ENCODE measurements at regions of chr14 and their contacts with region 1.

Region 1: DNA sequence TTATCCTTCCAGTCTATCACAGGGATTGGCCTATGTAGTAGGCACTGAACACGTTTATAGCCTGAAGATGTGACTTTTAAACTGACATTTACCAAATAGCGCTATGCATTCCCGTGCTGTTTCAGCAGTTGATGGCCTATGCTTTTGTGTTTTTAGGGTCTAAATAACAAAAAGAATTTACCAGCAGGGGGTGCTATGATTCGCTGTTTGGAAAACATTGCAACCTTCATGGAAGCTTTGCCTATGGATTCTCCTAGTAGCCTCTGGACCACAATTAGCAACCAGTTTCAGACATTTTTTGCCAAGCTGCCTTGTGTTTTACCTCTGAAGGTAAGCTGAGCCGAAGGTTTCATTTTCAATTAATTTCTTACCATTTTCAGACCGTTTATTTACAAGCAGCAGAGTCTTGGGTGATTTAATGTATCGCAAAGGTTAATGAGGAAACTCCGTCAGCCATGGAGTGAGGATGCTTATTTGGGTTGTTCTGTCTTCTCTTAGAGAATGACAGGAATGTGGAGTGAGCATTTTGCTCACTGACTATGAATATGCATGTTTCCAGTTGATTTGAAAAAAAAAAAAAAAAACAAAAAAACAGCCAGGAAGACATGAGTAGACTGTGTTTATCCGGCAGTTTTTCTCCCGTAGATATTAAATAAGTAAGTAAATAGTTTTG is 133.1 kb downstream of the PRIMA1 start:
- DNase-seq: peak; percentile 57
- H3K4me3 ChIP-seq: no peak overlapping the region
- H3K27ac ChIP-seq: no peak overlapping the region
- H3K4me1 ChIP-seq: no peaks in the 10 kb centered on the region
- CTCF ChIP-seq: peak; percentile 83

Region 2: DNA sequence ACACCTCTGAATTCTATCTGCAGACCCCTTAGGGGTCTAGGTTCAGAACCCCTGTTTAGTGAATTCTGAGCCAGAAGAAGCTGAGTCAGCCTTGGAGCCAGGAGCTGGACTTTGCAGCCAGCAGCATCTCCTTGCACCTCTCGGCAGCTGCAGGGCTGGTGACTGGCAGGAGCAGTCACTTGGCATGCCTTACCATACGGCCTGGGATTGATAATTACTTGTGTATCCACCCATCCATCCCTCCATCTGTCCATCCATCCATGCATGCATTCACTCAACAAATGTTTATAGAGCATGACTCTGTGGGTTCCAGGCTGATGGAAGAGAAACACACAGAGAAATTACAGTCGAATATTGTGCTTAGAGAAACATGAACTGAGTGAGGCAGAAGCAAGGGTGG is 200.5 kb after region 1 on chr14:
- CTCF ChIA-PET with region 1: no interaction called
- POLR2A ChIA-PET with region 1: no interaction called
- intact Hi-C with region 1: no loop called
- DNase-seq: no peak
- H3K4me3 ChIP-seq: no peak overlapping the region
- H3K27ac ChIP-seq: no peak overlapping the region
- H3K4me1 ChIP-seq: no peaks in the 10 kb centered on the region
- CTCF ChIP-seq: no peak

Region 3: GRCh38 chr14:93892923-93893558 is 237.8 kb after region 1 on chr14:
- CTCF ChIA-PET with region 1: no interaction called
- POLR2A ChIA-PET with region 1: no interaction called
- intact Hi-C with region 1: loop called (anchors 2 kb)
- DNase-seq: peak; percentile 66
- H3K4me3 ChIP-seq: no peak overlapping the region
- H3K27ac ChIP-seq: no peak overlapping the region
- H3K4me1 ChIP-seq: no peaks in the 10 kb centered on the region
- CTCF ChIP-seq: peak; percentile 94

Region 4: DNA sequence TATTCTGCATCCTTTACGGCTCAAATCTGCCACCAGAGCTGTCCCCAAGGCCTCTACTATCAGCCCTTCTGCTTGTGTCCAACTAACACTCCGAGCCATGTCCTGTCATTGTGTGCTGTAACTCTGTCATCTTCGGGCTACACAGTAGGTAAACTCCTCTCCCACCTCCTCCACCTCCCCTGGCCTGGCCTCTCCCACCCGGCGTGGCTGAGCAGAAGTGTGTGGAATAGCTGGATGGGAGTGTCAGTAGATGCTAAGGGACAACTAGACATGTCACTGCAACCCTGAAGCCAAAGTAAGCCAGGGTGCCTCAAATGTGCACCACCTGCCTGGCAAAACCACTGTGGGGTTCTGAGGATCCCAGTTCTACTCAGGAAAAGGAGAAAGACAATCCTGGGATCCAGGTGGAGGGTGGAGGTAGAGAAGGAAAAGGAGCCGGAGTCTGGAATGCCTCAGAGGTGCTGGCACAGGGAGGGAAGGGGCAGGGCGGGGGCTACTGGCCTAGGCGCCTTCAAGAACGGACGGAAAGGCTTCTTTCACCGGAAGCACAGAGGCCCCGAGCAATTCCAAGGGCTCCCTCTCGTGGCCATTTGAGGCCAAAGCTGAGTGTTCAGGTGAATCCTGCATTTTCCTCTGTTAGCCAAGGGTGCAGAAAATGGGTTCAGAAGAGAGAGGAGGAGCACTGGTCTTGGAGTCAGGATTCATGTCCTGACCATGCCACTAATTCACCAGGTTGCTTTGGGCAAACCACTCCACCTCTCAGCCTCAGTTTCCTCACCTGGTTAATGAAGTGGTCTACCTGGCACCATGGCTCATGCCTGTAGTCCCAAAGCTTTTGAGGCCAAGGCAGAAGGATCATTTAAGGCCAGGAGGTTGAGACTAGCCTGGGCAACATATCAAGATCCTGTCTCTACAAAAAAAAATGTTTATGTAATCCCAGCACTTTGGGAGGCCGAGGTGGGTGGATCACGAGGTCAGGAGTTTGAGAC is 251.4 kb after region 1 on chr14:
- CTCF ChIA-PET with region 1: no interaction called
- POLR2A ChIA-PET with region 1: interaction called, 5 read pairs
- intact Hi-C with region 1: loop called (anchors 2 kb)
- DNase-seq: peak; percentile 72
- H3K4me3 ChIP-seq: no peak overlapping the region
- H3K27ac ChIP-seq: no peak overlapping the region
- H3K4me1 ChIP-seq: no peaks in the 10 kb centered on the region
- CTCF ChIP-seq: peak; percentile 88